ENCODE measurements at regions of chr3 and their contacts with region 1.

Region 1: DNA sequence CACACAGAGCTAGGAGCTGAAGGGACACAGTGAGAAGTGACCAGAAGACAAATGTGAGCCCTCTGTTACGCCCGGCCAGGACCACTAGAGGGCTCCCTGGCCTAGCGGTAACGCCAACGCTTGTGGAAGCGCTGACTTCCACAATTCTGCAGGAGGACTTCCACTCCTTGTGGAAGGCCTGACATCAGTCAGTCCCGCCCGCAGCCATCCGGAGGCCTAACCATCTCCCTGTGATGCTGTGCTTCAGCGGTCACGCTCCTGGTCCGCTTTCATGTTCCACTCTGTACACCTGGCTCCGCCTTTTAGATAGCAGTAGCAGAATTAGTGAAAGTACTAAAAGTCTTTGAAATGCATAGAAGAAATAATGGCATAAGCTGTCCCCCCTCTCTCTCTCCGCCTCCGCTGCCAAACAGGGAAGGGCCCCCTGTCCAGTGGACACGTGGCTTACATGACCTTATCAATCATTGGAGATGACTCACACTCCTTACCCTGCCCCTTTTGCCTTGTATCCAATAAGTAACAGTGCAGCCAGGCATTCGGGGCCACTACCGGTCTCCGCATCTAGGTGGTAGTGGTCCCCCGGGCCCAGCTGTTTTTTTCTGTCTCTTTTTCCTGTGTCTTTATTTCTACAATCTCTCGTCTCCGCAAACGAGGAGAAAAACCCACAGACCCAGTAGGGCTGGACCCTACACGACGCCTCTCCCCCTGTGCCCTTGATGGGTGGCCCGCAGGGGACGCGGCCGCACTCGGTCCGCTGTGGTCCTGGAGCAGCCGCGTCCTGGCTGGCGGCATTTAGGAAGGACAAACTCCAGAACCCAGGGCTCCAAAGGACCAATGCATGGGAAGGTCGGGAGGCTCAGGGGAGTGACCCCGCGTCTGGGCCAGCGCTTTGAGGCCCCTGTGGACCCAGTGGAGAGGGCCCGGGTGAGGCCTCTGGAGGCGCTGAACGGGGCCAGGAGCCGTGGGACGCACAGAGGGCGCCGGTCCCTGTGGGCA is 27.0 kb upstream of the RPL32 start:
- DNase-seq: no peak
- ATAC-seq: peak; percentile 82
- H3K4me3 ChIP-seq: no peak overlapping the region
- H3K27ac ChIP-seq: no peak overlapping the region
- H3K4me1 ChIP-seq: peaks cover 28% of the 10 kb centered on the region
- H3K27me3 ChIP-seq: no peaks in the 10 kb centered on the region; a peak in 1 of 4 replicates
- CTCF ChIP-seq: peak; percentile 86 to 94 (median 90)
- EP300 ChIP-seq: no peak
- POLR2A ChIP-seq: no peak
- RAD21 ChIP-seq: peak; percentile 85

Region 2: GRCh38 chr3:11910971-11911531 is 957.3 kb before region 1 on chr3:
- CTCF ChIA-PET with region 1: no interaction called
- POLR2A ChIA-PET with region 1: no interaction called
- RAD21 ChIA-PET with region 1: no interaction called
- SMC1A ChIA-PET with region 1: no interaction called
- in situ Hi-C with region 1: loop called (anchors 5 kb)
- intact Hi-C with region 1: no loop called
- DNase-seq: no peak
- ATAC-seq: no peak
- H3K4me3 ChIP-seq: no peak overlapping the region
- H3K27ac ChIP-seq: no peak overlapping the region
- H3K4me1 ChIP-seq: no peaks in the 10 kb centered on the region; the same call in 1 of the 2 replicates
- H3K27me3 ChIP-seq: no peaks in the 10 kb centered on the region; a peak in 2 of 4 replicates
- CTCF ChIP-seq: no peak
- EP300 ChIP-seq: no peak
- POLR2A ChIP-seq: no peak
- RAD21 ChIP-seq: no peak

Region 3: DNA sequence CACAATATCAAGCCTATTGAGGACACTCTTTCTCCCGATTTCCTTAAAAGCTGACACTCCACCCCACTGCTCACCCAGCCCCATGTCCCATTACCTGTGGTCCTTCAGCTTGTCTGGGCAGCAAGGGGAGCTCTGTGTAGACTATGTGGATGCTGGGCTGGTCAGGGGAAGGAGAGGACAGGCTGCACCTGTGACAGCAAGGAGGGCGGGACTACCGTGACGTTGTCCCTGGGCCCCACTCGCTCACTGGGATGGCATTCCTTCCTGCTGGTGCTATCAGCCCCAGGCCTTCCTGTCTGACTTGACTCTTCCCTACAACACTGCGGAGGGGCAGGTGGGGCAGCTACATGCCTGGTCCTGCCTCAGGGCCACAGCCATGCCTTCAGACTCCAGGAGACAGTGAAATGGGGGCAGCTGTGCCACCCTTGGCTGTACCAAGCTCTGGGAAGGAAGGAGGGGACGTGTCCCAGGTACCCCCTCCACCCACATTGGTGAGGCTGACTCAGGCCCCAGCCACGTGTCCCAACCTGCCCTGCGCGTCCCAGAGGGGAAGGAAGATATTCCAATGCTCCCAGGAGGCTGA is 109.1 kb before region 1 on chr3 and contains the start of gene TMEM40:
- CTCF ChIA-PET with region 1: no interaction called
- POLR2A ChIA-PET with region 1: no interaction called
- RAD21 ChIA-PET with region 1: no interaction called
- SMC1A ChIA-PET with region 1: no interaction called
- in situ Hi-C with region 1: no loop called
- intact Hi-C with region 1: no loop called
- DNase-seq: no peak
- ATAC-seq: no peak; the same call in 2 of the 3 replicates
- H3K4me3 ChIP-seq: no peak within 1 kb of the TSS
- H3K27ac ChIP-seq: 0 out of 2 replicates have a peak within 1 kb of the TSS, but pooled peaks have one; percentile 30
- H3K4me1 ChIP-seq: peaks cover 24% of the 10 kb centered on the region
- H3K27me3 ChIP-seq: no peaks in the 10 kb centered on the region
- CTCF ChIP-seq: no peak
- EP300 ChIP-seq: no peak
- POLR2A ChIP-seq: no peak
- RAD21 ChIP-seq: no peak
- polyA plus RNA-seq, gene TMEM40: 0.13 to 0.35 TPM